Heart left ventricle (tissue), 16 donors: ENCODE measurements at regions of chr21 and their contacts with region 1.

Region 1: DNA sequence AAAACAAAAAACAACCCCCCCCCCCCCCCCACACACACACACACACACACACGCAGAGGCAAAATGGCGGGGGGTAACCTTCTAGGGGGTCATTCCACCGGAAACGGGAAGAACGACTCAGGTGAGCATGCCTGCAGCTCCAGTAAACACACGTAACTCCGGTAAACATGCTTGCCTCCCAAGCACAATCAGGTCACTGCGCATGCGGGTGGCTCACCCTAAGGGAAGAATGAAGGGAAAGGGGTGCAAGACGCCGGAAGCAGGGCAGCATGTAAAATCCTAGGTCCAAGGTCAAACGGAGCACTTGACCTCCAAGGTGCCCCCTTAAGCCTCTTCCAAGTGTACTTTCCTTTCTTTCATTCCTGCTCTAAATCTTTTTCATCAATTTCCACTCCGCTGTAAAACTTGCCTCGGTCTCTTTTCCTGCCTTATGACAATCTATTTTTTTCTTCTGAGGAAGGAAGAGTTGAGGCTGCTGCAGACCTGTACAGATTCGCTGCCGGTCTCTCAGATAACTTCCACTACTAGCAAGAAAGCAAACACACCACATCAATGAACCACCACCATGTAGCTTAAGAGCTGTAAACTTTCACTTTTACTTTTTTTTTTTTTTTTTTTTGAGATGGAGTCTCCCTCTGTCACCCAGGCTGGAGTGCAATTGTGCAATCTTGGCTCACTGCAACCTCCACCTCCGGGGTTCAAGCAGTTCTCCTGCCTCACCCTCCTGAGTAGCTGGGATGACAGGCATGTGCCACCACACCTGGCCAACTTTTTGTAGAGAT is 21.0 kb upstream of the CBR3 start:
- DNase-seq: no peak
- ATAC-seq: peak in 1 of 4 donors; percentile 22
- H3K4me3 ChIP-seq: peak overlapping the region in 1 of 12 donors; percentile 60
- H3K27ac ChIP-seq: peak overlapping the region in 1 of 12 donors; percentile 57
- H3K4me1 ChIP-seq: peaks cover 0 to 8% (median 1%) of the 10 kb centered on the region in 12 donors
- H3K27me3 ChIP-seq: no peaks in the 10 kb centered on the region
- CTCF ChIP-seq: no peak
- POLR2A ChIP-seq: no peak

Region 2: GRCh38 chr21:35905096-35905962 is 208.5 kb before region 1 on chr21:
- intact Hi-C with region 1: no loop called
- DNase-seq: peak in 3 of 5 donors; percentile 40 to 66 (median 50)
- ATAC-seq: peak; percentile 64 to 93 (median 78)
- H3K4me3 ChIP-seq: no peak overlapping the region
- H3K27ac ChIP-seq: peak overlapping the region in 9 of 12 donors; percentile 3 to 88 (median 43)
- H3K4me1 ChIP-seq: peaks cover 0 to 21% (median 0%) of the 10 kb centered on the region in 12 donors
- H3K27me3 ChIP-seq: no peaks in the 10 kb centered on the region
- CTCF ChIP-seq: no peak
- POLR2A ChIP-seq: no peak

Region 3: GRCh38 chr21:36028127-36029069 is 85.4 kb before region 1 on chr21:
- intact Hi-C with region 1: no loop called
- DNase-seq: peak; percentile 58 to 78 (median 70)
- ATAC-seq: peak; percentile 75 to 90 (median 85)
- H3K4me3 ChIP-seq: no peak overlapping the region
- H3K27ac ChIP-seq: no peak overlapping the region
- H3K4me1 ChIP-seq: peaks cover 0 to 4% (median 0%) of the 10 kb centered on the region in 12 donors
- H3K27me3 ChIP-seq: no peaks in the 10 kb centered on the region
- CTCF ChIP-seq: peak; percentile 87 to 98 (median 94)
- POLR2A ChIP-seq: no peak

Region 4: DNA sequence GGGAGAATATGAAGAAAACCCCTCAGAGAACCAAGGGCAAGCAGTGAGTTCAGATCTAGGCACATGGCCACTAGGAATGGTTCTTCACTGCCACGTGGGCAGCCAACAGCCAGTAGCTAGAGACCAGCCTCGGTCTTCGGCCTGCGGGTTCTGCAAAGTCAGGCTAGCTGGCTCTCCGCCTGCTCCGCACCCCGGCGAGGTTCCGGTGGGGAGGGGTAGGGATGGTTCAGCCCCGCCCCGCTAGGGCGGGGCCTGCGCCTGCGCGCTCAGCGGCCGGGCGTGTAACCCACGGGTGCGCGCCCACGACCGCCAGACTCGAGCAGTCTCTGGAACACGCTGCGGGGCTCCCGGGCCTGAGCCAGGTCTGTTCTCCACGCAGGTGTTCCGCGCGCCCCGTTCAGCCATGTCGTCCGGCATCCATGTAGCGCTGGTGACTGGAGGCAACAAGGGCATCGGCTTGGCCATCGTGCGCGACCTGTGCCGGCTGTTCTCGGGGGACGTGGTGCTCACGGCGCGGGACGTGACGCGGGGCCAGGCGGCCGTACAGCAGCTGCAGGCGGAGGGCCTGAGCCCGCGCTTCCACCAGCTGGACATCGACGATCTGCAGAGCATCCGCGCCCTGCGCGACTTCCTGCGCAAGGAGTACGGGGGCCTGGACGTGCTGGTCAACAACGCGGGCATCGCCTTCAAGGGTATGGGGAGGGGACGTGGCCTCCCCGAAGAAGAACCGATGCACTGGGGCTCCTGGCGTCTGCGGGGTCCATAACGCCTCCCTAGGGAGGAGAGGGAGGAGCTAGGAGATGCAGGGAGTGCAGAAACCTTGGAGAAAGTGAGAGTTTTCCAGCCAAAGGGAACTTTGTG is 43.9 kb before region 1 on chr21 and contains the start of gene CBR1:
- intact Hi-C with region 1: loop called in 5 of 10 experiments (anchors 5 to 10 kb)
- DNase-seq: peak; percentile 87 to 99 (median 97)
- ATAC-seq: peak; percentile 98 to 99 (median 99)
- H3K4me3 ChIP-seq: peak within 1 kb of the TSS; percentile 51 to 93 (median 70)
- H3K27ac ChIP-seq: peak within 1 kb of the TSS in 11 of 12 donors; percentile 33 to 89 (median 79)
- H3K4me1 ChIP-seq: peaks cover 0 to 33% (median 12%) of the 10 kb centered on the region in 12 donors
- H3K27me3 ChIP-seq: peaks cover 0 to 3% (median 0%) of the 10 kb centered on the region in 9 donors
- CTCF ChIP-seq: no peak
- POLR2A ChIP-seq: peak in 1 of 2 donors; percentile 91
- total RNA-seq, gene CBR1: 11.0 to 68.7 (median 21.6) TPM